ENCODE measurements at regions of chr6 and their contacts with region 1.

Region 1: DNA sequence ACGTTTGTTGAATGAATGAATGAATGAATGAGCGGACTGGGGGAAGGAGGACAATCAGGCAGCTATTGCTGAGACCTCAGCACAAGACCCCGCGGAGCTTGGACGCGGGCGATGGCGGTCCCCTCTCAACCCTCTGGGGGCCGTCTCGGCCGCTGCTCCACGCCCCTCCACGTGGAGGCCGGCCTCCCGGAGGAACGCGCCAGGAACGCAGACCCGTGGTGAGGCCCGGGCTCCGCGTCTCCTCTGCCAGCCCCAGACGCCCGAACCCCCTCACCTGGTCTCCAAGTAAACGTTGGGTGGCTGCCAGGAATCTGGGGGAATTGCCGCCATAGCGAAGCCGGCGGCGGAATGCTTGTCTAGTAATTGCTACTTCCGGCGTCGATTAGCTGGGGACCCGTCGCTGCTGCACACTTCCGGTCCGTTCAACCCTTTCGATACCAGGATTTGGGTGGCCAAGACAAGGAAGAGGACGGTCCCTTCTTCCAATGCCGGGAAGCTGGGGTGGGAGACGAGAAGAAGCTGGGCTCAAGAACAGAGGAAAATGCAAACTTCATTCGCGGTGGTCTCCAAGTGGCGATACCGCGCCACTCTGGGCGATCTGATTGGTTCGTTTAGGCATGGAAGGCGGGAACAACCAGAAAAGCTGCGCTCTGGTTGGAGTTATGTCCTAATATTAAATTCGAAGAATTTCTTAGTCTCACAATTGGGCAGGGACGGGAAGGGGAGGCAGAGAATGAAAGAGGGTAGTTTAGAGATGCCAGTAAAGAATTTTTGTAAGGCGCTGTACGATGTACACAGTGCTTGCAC is at the start of gene PPIL1:
- DNase-seq: peak; percentile 91

Region 2: GRCh38 chr6:36735110-36736071 is 139.3 kb before region 1 on chr6:
- CTCF ChIA-PET with region 1: no interaction called
- POLR2A ChIA-PET with region 1: no interaction called
- DNase-seq: no peak

Region 3: GRCh38 chr6:36885461-36886401 is 11.1 kb after region 1 on chr6 and contains the start of gene C6orf89:
- CTCF ChIA-PET with region 1: interaction called, 13 read pairs
- POLR2A ChIA-PET with region 1: interaction called, 70 read pairs
- DNase-seq: peak; percentile 93